CD4-positive, alpha-beta T cell (primary cell): ENCODE measurements at regions of chr5 and their contacts with region 1.

Region 1: DNA sequence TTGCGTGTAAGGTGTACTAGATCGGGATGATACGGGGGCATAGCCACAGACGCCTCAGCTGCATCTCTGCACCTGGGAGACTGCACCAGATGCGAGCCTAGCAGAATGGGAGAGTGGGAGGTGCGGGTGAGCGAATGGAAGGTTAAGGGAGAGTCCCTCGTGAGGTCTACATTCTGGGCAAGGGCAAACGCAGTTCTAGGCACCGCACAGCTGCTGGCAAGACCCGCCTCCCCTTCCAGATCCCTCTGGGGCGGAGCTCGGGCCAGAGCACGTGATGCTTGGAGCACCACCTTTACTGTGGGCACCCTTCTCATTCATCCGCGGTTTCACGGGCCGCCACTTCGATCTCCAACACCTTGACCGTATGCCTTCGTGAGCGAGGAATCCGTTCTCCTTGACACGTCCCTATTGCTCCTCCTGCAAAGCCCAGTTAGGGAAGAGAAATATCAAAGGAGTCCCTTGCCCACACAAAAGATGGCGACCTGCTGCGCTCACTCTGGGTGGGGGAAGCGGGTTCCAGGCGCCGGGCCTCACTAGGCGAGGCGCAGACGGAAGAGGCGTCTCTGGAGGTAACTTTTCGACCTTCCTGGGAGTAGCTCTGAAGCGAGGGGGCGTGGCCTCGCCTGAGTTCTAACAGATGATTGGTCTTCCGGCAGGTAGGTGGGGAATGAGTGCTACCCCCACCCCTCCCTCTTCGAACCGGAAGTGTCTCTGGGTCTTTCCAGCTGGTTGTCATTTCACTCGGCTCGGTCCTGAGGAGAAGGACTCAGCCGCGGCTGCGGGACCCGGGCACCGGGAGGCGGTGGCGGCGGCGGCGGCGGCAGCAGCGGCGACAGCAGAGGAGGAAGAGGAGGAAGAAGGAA is at the start of gene CPEB4:
- DNase-seq: peak; percentile 92 to 100 (median 96)
- ATAC-seq: peak; percentile 94
- H3K4me3 ChIP-seq: peak within 1 kb of the TSS; percentile 87
- H3K4me3 Mint-ChIP-seq: peak within 1 kb of the TSS; percentile 99
- H3K27ac ChIP-seq: peak within 1 kb of the TSS; percentile 77 to 89
- H3K27ac Mint-ChIP-seq: peak within 1 kb of the TSS; percentile 91
- H3K4me1 ChIP-seq: peaks cover 47% of the 10 kb centered on the region
- H3K4me1 Mint-ChIP-seq: peaks cover 90% of the 10 kb centered on the region
- H3K27me3 ChIP-seq: no peaks in the 10 kb centered on the region
- H3K27me3 Mint-ChIP-seq: no peaks in the 10 kb centered on the region
- CTCF ChIP-seq: no peak
- total RNA-seq, gene CPEB4: 18.3 to 19.2 TPM

Region 2: DNA sequence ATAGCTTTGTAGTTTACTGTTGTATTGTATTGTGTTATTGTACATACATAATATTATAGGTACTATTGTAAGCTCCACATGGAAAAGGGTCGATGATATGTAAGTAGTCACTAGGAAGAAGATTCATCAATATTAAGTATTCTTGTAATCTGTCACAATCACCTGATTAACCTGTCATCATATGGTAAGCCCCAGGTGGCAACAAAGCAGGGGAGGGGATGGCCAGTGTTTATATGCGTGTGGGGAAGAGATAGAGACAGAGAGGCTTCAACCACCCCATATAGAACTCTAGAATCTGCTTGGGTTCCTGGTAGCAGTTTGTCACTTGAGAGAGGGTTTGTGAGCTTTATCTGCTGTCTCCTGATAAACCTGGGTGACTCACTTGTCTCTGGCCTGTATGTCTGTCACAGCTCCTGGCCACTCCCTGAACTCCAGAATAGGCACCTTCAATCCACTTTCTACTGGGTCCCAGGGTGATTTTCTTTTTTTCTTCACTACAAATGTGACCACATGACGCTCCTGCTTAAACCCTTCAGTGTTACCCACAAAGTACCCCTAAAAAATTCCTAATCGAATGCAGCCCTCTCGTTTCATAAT is 48.6 kb before region 1 on chr5:
- CTCF ChIA-PET with region 1: no interaction called
- POLR2A ChIA-PET with region 1: no interaction called
- intact Hi-C with region 1: no loop called
- DNase-seq: no peak
- ATAC-seq: no peak
- H3K4me3 ChIP-seq: no peak overlapping the region
- H3K4me3 Mint-ChIP-seq: no peak overlapping the region
- H3K27ac ChIP-seq: no peak overlapping the region
- H3K27ac Mint-ChIP-seq: no peak overlapping the region
- H3K4me1 ChIP-seq: no peaks in the 10 kb centered on the region
- H3K4me1 Mint-ChIP-seq: no peaks in the 10 kb centered on the region
- H3K27me3 ChIP-seq: no peaks in the 10 kb centered on the region
- H3K27me3 Mint-ChIP-seq: no peaks in the 10 kb centered on the region
- CTCF ChIP-seq: no peak

Region 3: GRCh38 chr5:173907686-173908371 is 20.0 kb after region 1 on chr5:
- CTCF ChIA-PET with region 1: interaction called, 3 read pairs
- POLR2A ChIA-PET with region 1: interaction called, 13 read pairs
- intact Hi-C with region 1: no loop called
- DNase-seq: no peak
- ATAC-seq: no peak
- H3K4me3 ChIP-seq: no peak overlapping the region
- H3K4me3 Mint-ChIP-seq: no peak overlapping the region
- H3K27ac ChIP-seq: no peak overlapping the region
- H3K27ac Mint-ChIP-seq: no peak overlapping the region
- H3K4me1 ChIP-seq: no peaks in the 10 kb centered on the region
- H3K4me1 Mint-ChIP-seq: peaks cover 38% of the 10 kb centered on the region
- H3K27me3 ChIP-seq: no peaks in the 10 kb centered on the region
- H3K27me3 Mint-ChIP-seq: no peaks in the 10 kb centered on the region
- CTCF ChIP-seq: no peak